ENCODE measurements at regions of chr5 and their contacts with region 1.

Region 1: DNA sequence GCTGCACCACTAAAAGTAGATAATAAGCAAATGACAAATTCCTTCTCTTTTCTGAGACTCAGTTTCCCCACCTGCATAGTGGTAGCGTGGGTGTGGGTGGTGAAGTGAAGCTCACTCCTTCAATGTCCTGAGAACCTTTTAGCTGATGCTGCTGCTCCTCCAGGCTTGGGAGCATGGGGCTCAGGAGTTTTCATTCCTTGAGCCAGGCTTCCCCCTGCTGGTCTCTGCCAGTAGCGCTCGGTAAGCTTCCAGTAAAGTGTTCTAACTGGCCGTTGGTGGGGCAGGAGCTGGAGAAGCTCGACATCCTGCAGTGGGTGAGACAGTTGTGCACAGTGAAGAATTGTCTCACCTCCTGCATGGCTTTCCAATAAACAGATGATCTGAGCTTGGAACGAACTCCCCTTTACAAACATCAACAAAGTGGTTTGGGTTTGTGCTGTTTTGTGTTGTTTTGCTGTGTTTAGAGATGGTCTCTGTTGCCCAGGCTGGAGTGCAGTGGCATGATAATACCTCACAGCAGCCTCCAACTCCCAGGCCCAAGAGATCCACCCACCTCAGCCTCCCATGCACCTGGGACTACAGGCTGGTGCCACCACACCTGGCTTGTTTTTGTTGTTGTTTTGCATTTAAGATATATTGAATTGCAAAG is 34.6 kb downstream of the SPARC start:
- DNase-seq: peak; percentile 49
- ATAC-seq: peak; percentile 96
- H3K4me3 Mint-ChIP-seq: no peak overlapping the region
- H3K27ac Mint-ChIP-seq: no peak overlapping the region
- H3K4me1 Mint-ChIP-seq: no peaks in the 10 kb centered on the region
- H3K27me3 Mint-ChIP-seq: peaks cover 8% of the 10 kb centered on the region
- CTCF ChIP-seq: peak; percentile 36

Region 2: GRCh38 chr5:150801117-150801927 is 850.8 kb before region 1 on chr5:
- CTCF ChIA-PET with region 1: interaction called, 3 read pairs
- POLR2A ChIA-PET with region 1: no interaction called
- intact Hi-C with region 1: loop called (anchors 2 kb)
- DNase-seq: no peak
- ATAC-seq: no peak
- H3K4me3 Mint-ChIP-seq: no peak overlapping the region
- H3K27ac Mint-ChIP-seq: no peak overlapping the region
- H3K4me1 Mint-ChIP-seq: no peaks in the 10 kb centered on the region
- H3K27me3 Mint-ChIP-seq: peaks cover 18% of the 10 kb centered on the region
- CTCF ChIP-seq: no peak

Region 3: GRCh38 chr5:151315998-151316597 is 336.0 kb before region 1 on chr5:
- CTCF ChIA-PET with region 1: interaction called, 5 read pairs
- POLR2A ChIA-PET with region 1: no interaction called
- intact Hi-C with region 1: loop called (anchors 2 kb)
- DNase-seq: peak; percentile 40
- ATAC-seq: peak; percentile 83
- H3K4me3 Mint-ChIP-seq: no peak overlapping the region
- H3K27ac Mint-ChIP-seq: no peak overlapping the region
- H3K4me1 Mint-ChIP-seq: peaks cover 11% of the 10 kb centered on the region
- H3K27me3 Mint-ChIP-seq: peaks cover 5% of the 10 kb centered on the region
- CTCF ChIP-seq: peak; percentile 64

Region 4: DNA sequence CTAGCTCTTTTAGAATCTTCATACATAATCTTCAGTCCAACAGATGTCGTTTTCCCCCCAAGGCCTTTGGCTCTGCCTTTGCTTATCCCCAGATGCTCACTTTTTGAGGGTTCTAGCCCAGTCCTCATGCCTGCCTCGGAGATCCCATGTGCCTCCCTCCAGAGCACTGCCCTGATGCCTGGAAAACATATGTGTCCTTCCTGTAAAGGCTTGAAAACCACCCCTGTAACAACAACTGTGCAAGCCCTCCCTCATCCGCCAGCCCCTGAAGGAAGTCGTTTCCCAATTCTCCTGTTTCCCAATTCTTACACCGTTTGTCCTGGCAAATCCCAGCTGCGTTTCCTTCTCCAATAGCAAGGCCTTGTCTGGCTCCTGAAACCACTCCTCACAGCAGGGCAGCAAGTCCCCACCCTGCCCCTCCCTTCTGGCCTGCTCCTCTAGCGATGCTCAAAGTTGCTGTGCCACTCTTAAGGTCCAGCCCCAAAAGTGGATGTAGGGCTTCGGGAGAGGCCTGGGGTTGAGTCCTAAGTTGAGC is 152.6 kb before region 1 on chr5:
- CTCF ChIA-PET with region 1: interaction called, 5 read pairs
- POLR2A ChIA-PET with region 1: no interaction called
- intact Hi-C with region 1: loop called (anchors 1 kb)
- DNase-seq: no peak
- ATAC-seq: no peak
- H3K4me3 Mint-ChIP-seq: no peak overlapping the region
- H3K27ac Mint-ChIP-seq: no peak overlapping the region
- H3K4me1 Mint-ChIP-seq: peaks cover 5% of the 10 kb centered on the region
- H3K27me3 Mint-ChIP-seq: no peaks in the 10 kb centered on the region
- CTCF ChIP-seq: no peak

Region 5: DNA sequence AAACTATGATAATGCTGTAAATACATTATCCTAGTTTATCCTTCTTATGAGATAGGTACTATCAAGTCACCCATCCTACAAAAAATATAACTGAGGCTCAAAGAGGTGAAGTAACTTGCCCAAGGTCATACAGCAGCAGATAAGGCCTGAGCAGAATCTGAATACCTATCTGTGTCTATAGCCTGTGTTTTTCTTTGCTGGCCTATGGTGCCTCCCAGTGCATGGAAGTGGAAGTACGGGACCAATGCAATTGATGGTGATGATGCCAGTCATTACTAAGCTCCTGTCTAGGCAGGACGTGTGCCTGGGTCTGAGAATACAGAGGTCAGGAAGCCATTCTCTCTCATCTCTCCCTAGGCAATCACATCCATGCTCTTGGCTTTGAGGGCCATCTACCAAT is 128.8 kb before region 1 on chr5:
- CTCF ChIA-PET with region 1: interaction called, 12 read pairs
- POLR2A ChIA-PET with region 1: no interaction called
- intact Hi-C with region 1: loop called (anchors 1 kb)
- DNase-seq: no peak
- ATAC-seq: peak; percentile 79
- H3K4me3 Mint-ChIP-seq: no peak overlapping the region
- H3K27ac Mint-ChIP-seq: no peak overlapping the region
- H3K4me1 Mint-ChIP-seq: no peaks in the 10 kb centered on the region
- H3K27me3 Mint-ChIP-seq: peaks cover 2% of the 10 kb centered on the region
- CTCF ChIP-seq: no peak

Region 6: GRCh38 chr5:151585970-151586369 is 66.2 kb before region 1 on chr5:
- CTCF ChIA-PET with region 1: no interaction called
- POLR2A ChIA-PET with region 1: no interaction called
- intact Hi-C with region 1: no loop called
- DNase-seq: no peak
- ATAC-seq: no peak
- H3K4me3 Mint-ChIP-seq: no peak overlapping the region
- H3K27ac Mint-ChIP-seq: no peak overlapping the region
- H3K4me1 Mint-ChIP-seq: no peaks in the 10 kb centered on the region
- H3K27me3 Mint-ChIP-seq: no peaks in the 10 kb centered on the region
- CTCF ChIP-seq: no peak

Region 7: GRCh38 chr5:151740336-151740942 is 88.3 kb after region 1 on chr5:
- CTCF ChIA-PET with region 1: interaction called, 223 read pairs
- POLR2A ChIA-PET with region 1: no interaction called
- intact Hi-C with region 1: no loop called
- DNase-seq: no peak
- ATAC-seq: peak; percentile 69
- H3K4me3 Mint-ChIP-seq: no peak overlapping the region
- H3K27ac Mint-ChIP-seq: no peak overlapping the region
- H3K4me1 Mint-ChIP-seq: peaks cover 16% of the 10 kb centered on the region
- H3K27me3 Mint-ChIP-seq: no peaks in the 10 kb centered on the region
- CTCF ChIP-seq: peak; percentile 68

Region 8: DNA sequence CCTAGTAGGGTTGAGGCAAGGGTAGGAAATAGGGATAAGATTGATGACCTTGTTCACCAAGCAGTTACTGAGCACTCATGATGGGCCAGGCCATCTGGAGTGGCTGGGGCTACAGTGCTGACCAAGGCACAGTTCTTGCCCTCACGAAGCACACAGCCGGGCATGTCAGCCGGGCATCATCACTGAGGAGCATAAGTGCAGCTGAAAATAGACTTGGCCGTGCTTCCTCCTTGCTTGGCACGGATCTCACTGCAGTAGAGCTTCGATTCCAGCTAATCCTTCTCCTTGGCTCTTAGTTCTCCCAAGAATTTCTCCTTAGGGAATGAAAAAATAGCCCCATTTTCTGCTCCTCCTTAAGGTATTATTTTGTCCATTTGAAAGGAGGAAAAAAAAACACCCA is 636.4 kb after region 1 on chr5:
- CTCF ChIA-PET with region 1: no interaction called
- POLR2A ChIA-PET with region 1: no interaction called
- intact Hi-C with region 1: no loop called
- DNase-seq: no peak
- ATAC-seq: no peak
- H3K4me3 Mint-ChIP-seq: no peak overlapping the region
- H3K27ac Mint-ChIP-seq: no peak overlapping the region
- H3K4me1 Mint-ChIP-seq: no peaks in the 10 kb centered on the region
- H3K27me3 Mint-ChIP-seq: no peaks in the 10 kb centered on the region
- CTCF ChIP-seq: no peak

Measured in activated B cell treated with CpG ODN at 0.5 μM for 24 hours (primary cell).